HepG2 (cell line): ENCODE measurements at regions of chr4 and their contacts with region 1.

Region 1: DNA sequence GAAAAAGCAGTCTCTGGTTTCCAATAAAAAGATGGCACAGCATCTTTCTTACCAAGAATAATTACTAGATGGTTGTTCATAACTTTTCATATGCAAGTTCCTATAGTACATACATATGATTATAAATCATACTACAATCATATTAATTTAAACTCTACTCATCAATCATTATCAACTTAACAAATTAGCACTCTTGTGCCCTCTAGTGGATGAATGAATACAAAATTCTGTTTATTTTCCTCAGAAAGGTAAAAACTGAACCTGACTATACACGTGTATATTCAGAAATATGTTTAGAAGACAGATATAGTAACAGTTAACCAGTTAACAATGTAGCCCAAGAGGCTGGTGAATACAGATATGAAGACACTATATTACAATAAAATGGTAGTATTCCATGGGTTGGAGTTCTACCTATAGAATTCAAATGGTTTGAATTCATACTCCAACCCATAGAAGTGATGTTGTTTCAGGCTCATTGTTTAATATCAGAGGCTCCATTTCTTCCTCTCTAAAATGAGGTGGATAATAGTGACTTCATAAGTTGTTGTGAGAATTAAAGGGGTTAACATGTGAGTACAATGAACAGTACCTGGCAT is 100.0 kb downstream of the ADAMTS3 start:
- DNase-seq: peak; percentile 17
- ATAC-seq: no peak
- H3K4me3 ChIP-seq: no peak overlapping the region
- H3K27ac ChIP-seq: no peak overlapping the region
- H3K4me1 ChIP-seq: no peaks in the 10 kb centered on the region
- H3K27me3 ChIP-seq: no peaks in the 10 kb centered on the region
- CTCF ChIP-seq: peak; percentile 27
- EP300 ChIP-seq: no peak
- POLR2A ChIP-seq: no peak
- RAD21 ChIP-seq: no peak

Region 2: DNA sequence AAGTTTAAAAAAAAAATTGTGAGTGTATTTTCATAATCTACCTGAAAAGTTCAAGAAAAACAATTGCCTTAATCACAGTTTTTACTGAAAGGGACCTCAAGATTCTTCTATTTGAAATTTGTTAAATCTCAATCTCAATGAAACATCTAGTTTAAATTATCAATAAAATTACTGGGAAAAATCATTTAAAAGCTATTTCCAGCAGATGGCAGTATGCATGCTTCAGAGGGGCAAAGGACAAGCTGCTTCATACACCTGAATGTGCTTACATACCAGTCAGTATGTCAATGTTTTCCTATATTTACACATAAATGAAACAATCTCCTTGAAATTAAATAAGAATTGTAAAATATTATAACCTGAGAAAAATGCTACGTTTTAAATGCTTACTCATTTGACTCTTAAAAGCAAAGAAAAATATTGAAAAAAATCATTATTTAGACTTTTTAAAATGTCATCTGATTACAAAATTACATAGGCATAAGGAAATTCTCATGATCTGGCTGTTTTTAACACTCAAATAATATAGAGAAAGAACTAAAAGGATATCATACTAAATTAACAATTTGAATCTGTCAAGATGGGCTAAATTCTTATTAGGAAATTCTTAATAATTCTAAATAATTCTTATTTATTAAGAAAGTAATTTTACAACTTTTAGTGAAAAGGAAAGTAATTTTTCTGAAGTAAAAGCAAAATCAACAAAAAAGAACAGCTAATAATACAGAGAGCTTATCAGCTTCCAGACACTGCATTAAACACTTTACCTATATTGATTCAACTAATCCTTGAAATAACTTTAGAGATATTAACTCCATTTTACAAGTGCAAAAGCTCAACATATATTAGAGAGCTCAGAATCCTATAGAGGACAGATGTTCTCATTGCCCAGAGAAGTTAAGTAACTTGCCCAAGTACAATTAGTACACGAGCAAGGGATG is 142.0 kb before region 1 on chr4:
- CTCF ChIA-PET with region 1: interaction called, 19 read pairs
- POLR2A ChIA-PET with region 1: no interaction called
- in situ Hi-C with region 1: loop called (anchors 25 kb)
- intact Hi-C with region 1: loop called (anchors 1 kb)
- DNase-seq: peak; percentile 33
- ATAC-seq: peak; percentile 49; the same call in 2 of the 3 replicates
- H3K4me3 ChIP-seq: no peak overlapping the region
- H3K27ac ChIP-seq: no peak overlapping the region
- H3K4me1 ChIP-seq: no peaks in the 10 kb centered on the region
- H3K27me3 ChIP-seq: no peaks in the 10 kb centered on the region; a peak in 1 of 5 replicates
- CTCF ChIP-seq: peak; percentile 54
- EP300 ChIP-seq: no peak
- POLR2A ChIP-seq: no peak
- RAD21 ChIP-seq: no peak